ENCODE measurements at regions of chr5 and their contacts with region 1.

Region 1: DNA sequence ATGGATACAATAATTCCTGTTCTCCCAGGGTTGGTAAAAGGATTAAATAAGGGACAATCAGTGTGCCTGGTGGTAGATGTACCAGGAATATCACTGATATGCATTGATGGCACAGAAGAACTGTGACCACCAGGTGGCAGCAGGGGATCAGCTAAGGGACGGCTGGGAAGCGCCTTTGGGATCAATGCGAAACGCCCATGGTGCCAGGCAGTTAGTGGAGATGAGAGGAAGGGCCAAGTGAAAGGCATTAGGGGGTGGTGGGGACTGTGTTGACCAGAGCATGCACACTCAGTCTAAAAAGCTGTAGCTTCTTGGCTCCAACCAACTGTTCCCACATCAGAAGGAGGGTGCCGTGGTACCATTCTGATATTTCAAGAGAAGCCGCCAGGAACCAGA is 55.6 kb downstream of the ARHGEF37 start:
- DNase-seq: peak; percentile 55 to 72 (median 64)
- ATAC-seq: peak; percentile 55
- H3K4me3 ChIP-seq: no peak overlapping the region
- H3K27ac ChIP-seq: no peak overlapping the region
- H3K4me1 ChIP-seq: peaks cover 28 to 30% of the 10 kb centered on the region in 2 experiments
- H3K27me3 ChIP-seq: no peaks in the 10 kb centered on the region
- CTCF ChIP-seq: peak; percentile 79 to 88 (median 87)
- EP300 ChIP-seq: no peak
- POLR2A ChIP-seq: no peak
- RAD21 ChIP-seq: peak; percentile 93 to 95

Region 2: GRCh38 chr5:149775785-149776184 is 138.9 kb after region 1 on chr5:
- CTCF ChIA-PET with region 1: no interaction called
- POLR2A ChIA-PET with region 1: no interaction called
- in situ Hi-C with region 1: no loop called
- intact Hi-C with region 1: loop called (anchors 5 kb)
- DNase-seq: peak; percentile 43 to 68 (median 65)
- ATAC-seq: peak; percentile 87
- H3K4me3 ChIP-seq: no peak overlapping the region
- H3K27ac ChIP-seq: no peak overlapping the region
- H3K4me1 ChIP-seq: peaks cover 3 to 25% of the 10 kb centered on the region in 2 experiments; a peak in 2 of 5 replicates
- H3K27me3 ChIP-seq: no peaks in the 10 kb centered on the region
- CTCF ChIP-seq: peak; percentile 54 to 70 (median 68)
- EP300 ChIP-seq: no peak
- POLR2A ChIP-seq: no peak
- RAD21 ChIP-seq: peak; percentile 46 to 72

Region 3: DNA sequence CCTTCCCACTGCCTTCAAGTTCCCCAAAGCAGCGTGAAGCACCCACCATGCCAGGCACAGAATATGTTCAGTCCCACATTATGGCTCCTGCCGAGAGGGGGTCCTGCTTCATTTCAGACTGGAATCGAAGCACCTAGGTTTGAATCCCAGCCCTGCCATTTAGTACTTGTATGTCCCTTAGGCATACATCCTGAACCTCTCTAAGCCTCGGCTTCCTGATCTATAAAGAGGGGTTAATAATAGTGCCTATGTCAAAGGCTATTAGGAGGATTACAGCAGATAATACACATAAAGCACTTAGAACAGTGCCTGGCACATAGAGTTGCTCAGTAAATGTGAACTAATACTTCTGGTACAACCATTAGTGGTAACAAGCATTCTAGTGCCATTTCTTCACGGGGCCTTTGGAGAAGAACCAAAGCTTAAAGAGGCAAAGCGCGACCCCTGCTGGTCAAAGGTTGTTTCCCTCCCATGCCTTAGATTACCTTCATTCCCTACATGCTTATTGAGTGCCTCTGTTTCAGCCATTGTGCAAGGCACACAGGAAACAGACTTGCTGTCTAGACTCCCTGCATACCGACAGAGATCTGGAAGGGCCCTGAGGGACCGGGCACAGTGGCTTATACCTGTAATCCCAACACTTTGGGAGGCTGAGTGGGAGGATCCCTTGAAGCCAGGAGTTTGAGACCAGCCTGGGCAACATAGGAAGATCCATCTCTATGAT is 191.5 kb after region 1 on chr5:
- CTCF ChIA-PET with region 1: interaction called, 108 read pairs
- POLR2A ChIA-PET with region 1: interaction called, 9 read pairs
- in situ Hi-C with region 1: loop called (anchors 5 kb)
- intact Hi-C with region 1: loop called (anchors 1 kb)
- DNase-seq: peak; percentile 73 to 89 (median 78)
- ATAC-seq: peak; percentile 97
- H3K4me3 ChIP-seq: no peak overlapping the region
- H3K27ac ChIP-seq: no peak overlapping the region
- H3K4me1 ChIP-seq: no peaks in the 10 kb centered on the region; a peak in 1 of 5 replicates
- H3K27me3 ChIP-seq: no peaks in the 10 kb centered on the region
- CTCF ChIP-seq: peak; percentile 84 to 91 (median 87)
- EP300 ChIP-seq: no peak
- POLR2A ChIP-seq: no peak
- RAD21 ChIP-seq: peak; percentile 97 to 98

Region 4: DNA sequence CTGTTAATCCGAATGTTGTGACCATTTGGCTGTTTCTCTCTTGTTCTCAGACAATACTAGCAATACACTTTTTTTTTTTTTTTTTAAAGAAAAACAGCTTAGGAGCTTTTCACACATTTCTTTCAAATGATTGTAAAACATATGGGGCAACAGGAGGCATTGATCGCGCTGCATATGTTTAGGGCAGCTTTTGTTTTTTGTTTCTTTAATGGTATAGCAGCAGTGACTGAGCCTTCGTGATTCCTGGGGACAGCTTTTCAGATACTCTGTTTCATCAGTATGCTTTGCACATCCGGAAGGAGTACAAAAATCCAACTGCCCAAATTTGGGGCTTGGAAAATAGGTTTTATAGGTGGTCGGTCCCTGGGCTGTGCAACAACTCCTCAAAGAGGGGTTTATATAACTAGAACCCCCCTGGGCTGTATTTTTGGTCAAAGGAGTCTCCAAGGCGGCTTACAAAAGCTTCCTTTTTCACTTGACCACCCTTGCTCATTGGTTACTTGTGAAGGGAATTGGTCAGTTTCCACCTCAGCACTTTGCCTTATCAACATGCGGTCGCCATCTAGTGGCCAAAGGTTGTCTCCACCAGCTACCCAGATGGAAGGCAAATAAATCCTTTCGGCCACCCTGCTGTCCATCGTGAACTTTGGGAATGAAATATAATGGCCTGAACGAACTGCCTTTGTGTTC is 215.9 kb after region 1 on chr5:
- CTCF ChIA-PET with region 1: interaction called, 7 read pairs
- POLR2A ChIA-PET with region 1: interaction called, 6 read pairs
- in situ Hi-C with region 1: no loop called
- intact Hi-C with region 1: loop called (anchors 1 kb)
- DNase-seq: peak; percentile 68 to 82 (median 71)
- ATAC-seq: peak; percentile 96
- H3K4me3 ChIP-seq: no peak overlapping the region
- H3K27ac ChIP-seq: no peak overlapping the region; the same call in 2 of the 3 replicates
- H3K4me1 ChIP-seq: no peaks in the 10 kb centered on the region
- H3K27me3 ChIP-seq: no peaks in the 10 kb centered on the region
- CTCF ChIP-seq: peak; percentile 81 to 94 (median 87)
- EP300 ChIP-seq: no peak
- POLR2A ChIP-seq: no peak
- RAD21 ChIP-seq: peak; percentile 69 to 81

Region 5: DNA sequence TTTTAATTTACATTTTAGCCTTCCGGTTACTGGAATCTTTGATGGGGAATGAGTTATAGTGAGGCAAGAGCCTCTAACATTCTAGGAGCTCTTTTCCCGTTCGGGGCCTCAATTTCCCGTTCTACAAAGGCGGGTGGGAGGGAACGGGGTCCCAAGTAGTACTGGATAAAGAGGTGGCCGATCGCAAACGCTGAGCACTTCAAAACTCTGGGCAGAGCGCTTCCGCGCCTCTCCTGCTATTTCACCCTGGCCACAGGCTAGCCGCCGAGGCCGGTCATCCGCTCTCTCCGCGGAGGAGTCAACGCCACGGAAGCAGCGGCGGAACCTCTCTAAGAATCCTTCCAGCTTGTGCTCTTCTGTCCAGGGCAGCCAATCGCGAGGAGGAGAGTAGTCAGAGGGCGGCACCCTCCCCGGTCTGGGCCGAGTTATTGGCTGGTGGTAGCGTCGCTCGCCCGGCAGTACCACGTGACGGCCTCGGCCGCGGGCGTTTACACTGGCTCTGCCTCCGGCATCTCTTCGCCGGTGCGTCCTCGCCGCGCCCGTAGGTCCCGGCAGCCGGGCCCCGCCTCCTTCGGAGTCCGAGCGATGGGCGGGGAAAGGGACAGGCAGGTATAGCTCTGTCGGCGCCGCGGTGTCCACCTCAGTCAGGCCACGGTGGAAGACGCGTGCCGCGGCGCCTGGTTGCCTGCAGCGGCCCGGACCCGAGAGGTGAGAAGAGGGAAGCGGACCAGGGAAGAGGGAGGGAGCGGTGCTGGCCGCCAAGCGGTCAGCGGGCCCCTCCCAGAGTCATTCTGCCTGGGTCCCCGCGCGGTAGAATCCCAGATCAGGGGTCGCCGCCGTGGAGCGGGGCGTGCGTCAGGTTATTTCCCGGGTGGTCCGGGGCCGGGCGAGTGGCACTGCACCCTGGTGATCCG is 323.7 kb after region 1 on chr5 and contains the start of gene SLC26A2:
- CTCF ChIA-PET with region 1: interaction called, 5 read pairs
- POLR2A ChIA-PET with region 1: no interaction called
- in situ Hi-C with region 1: no loop called
- intact Hi-C with region 1: loop called (anchors 2 kb)
- DNase-seq: peak; percentile 97 to 98 (median 98)
- ATAC-seq: peak; percentile 99
- H3K4me3 ChIP-seq: peak within 1 kb of the TSS; percentile 66
- H3K27ac ChIP-seq: peak within 1 kb of the TSS; percentile 84
- H3K4me1 ChIP-seq: peaks cover 14 to 21% of the 10 kb centered on the region in 2 experiments; a peak in 4 of 5 replicates
- H3K27me3 ChIP-seq: no peaks in the 10 kb centered on the region
- CTCF ChIP-seq: no peak
- EP300 ChIP-seq: no peak
- POLR2A ChIP-seq: peak; percentile 92
- RAD21 ChIP-seq: no peak
- polyA plus RNA-seq, gene SLC26A2: 1.1 to 2.0 TPM

Region 6: DNA sequence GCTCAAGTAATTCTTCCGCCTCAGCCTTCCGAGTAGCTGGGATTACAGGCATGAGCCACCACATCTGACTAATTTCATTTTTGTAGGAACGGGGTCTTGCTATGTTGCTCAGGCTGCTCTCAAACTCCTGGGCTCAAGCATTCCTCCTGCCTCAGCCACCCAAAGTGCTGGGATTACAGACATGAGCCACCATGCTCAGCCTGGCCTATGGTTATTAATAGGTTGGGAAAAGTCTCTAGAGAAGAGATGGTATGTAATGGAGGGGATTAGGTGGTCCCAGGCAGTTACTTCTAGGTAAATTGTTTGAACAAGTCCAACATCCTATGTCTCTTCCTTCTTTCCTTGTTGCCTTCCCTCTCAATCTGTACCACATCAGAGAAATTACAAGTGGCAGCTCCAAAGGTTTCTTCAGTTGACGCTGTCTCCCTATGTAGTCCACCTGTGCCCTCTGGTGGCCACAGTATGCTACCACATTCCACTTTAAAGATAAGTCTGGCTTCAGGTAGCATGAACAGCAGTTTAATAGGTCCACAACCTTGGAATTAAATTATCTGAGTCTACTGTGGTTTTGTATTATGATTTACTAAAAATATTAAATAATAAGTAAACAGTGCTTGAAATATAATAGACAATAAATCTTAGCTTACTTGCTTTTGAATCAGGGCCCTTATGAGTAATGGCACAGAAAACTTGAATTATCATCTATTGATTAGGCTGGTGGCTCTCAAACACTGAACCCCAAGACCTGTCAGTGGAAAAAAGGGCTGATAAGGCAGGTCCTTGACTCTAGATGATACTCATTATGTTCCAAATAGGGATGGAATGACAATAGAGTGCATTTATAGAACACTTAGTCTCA is 353.9 kb after region 1 on chr5:
- CTCF ChIA-PET with region 1: no interaction called
- POLR2A ChIA-PET with region 1: no interaction called
- in situ Hi-C with region 1: loop called (anchors 5 kb)
- intact Hi-C with region 1: loop called (anchors 1 kb)
- DNase-seq: peak; percentile 69 to 83 (median 73)
- ATAC-seq: peak; percentile 92
- H3K4me3 ChIP-seq: no peak overlapping the region
- H3K27ac ChIP-seq: no peak overlapping the region
- H3K4me1 ChIP-seq: no peaks in the 10 kb centered on the region; a peak in 2 of 5 replicates
- H3K27me3 ChIP-seq: no peaks in the 10 kb centered on the region
- CTCF ChIP-seq: peak; percentile 87 to 97 (median 91)
- EP300 ChIP-seq: no peak
- POLR2A ChIP-seq: no peak
- RAD21 ChIP-seq: peak; percentile 94 to 97

Region 7: DNA sequence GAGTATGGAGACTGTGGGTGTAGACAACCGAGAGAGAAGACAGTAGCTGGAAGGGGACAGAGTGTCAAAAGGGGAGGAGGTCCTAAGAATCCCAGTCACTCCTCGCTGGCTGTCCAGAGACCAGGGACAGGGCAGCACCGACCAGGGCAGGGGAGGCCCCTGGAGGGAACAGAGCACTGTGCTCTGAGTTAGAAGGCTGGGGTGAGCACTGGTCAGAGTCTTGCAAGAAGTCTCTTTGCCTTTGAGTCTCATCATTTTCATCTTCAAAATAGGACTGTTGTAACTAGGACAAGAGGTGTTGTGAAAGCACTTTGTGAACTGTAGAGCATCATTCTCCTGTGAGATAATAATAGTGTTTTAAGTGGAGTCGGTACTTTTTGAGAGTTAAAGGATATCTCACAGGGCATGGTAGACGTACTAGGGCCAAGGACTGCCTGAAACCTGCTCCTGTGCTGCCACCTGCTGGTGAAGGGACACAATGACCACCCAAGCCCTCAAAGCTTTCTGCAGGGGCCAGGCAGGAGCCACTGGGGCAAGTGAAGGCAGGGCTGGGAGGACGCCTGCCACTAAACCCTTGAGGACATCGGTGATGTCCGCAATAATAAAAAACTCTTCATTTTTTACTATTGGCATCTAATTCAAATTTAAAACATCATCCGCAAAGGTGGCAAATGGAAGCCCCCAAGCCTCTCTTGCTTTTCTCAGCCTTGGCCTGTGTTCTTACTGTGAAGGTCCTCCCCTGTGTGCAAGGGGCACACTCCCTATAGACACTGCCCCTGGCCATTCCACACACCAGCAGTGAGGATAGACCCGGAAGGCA is 581.2 kb after region 1 on chr5:
- CTCF ChIA-PET with region 1: interaction called, 4 read pairs
- POLR2A ChIA-PET with region 1: no interaction called
- in situ Hi-C with region 1: loop called (anchors 10 kb)
- intact Hi-C with region 1: no loop called
- DNase-seq: peak; percentile 82 to 89 (median 88)
- ATAC-seq: peak; percentile 97
- H3K4me3 ChIP-seq: no peak overlapping the region
- H3K27ac ChIP-seq: no peak overlapping the region
- H3K4me1 ChIP-seq: peaks cover 3 to 4% of the 10 kb centered on the region in 2 experiments; a peak in 3 of 5 replicates
- H3K27me3 ChIP-seq: peaks cover 13 to 34% of the 10 kb centered on the region in 2 experiments; a peak in 4 of 5 replicates
- CTCF ChIP-seq: peak; percentile 89 to 94 (median 90)
- EP300 ChIP-seq: no peak
- POLR2A ChIP-seq: no peak
- RAD21 ChIP-seq: peak; percentile 96